ENCODE measurements at regions of chr6 and their contacts with region 1.

Region 1: GRCh38 chr6:168884646-168885086 is 369.0 kb downstream of the THBS2 start:
- DNase-seq: peak in 2 of 3 donors; percentile 73 to 79
- ATAC-seq: peak; percentile 88 to 97 (median 94)
- H3K4me3 ChIP-seq: peak overlapping the region in 1 of 3 donors; percentile 20
- H3K27ac ChIP-seq: no peak overlapping the region
- H3K4me1 ChIP-seq: no peaks in the 10 kb centered on the region
- H3K27me3 ChIP-seq: no peaks in the 10 kb centered on the region
- CTCF ChIP-seq: peak; percentile 90 to 93 (median 92)
- POLR2A ChIP-seq: no peak

Region 2: DNA sequence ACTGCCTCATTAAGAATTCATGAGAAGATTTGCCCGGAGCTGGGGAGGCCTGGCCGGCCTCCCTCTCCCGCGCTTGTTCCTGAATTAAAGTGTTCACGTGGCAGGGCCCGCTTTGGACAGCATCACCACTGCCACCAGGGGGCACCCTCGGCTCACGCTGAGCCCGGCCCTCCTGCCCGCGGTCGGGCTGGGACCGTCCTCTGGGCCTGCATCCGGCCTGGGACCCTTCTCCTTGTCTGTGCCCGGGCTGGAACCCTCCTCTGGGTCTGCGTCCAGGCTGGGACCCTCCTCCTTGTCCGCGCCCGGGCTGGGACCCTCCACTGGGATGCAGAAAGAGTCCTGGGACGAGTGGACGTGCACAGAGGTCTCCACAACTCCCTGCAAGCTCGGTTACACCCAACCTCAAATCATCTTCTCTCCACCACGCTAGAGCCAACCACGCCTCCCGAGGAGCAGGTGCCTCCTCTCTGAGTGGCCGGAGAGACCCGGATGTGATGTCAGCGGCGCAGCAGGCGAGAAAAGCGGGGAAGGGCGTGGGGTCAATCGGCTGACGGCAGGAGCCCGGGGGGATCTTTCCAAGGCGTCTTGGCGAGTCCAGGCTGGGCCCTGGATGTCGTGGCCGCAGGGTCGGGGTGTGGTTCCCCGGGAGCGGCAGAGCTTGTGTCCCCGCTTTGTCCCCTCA is 514.2 kb before region 1 on chr6:
- intact Hi-C with region 1: loop called (anchors 5 kb)
- DNase-seq: peak; percentile 71 to 76 (median 73)
- ATAC-seq: peak; percentile 93 to 97 (median 95)
- H3K4me3 ChIP-seq: no peak overlapping the region
- H3K27ac ChIP-seq: no peak overlapping the region
- H3K4me1 ChIP-seq: no peaks in the 10 kb centered on the region
- H3K27me3 ChIP-seq: no peaks in the 10 kb centered on the region
- CTCF ChIP-seq: peak; percentile 78 to 88 (median 84)
- POLR2A ChIP-seq: no peak

Region 3: GRCh38 chr6:168377484-168377855 is 507.2 kb before region 1 on chr6:
- intact Hi-C with region 1: loop called (anchors 5 kb)
- DNase-seq: no peak
- ATAC-seq: no peak
- H3K4me3 ChIP-seq: no peak overlapping the region
- H3K27ac ChIP-seq: no peak overlapping the region
- H3K4me1 ChIP-seq: no peaks in the 10 kb centered on the region
- H3K27me3 ChIP-seq: no peaks in the 10 kb centered on the region
- CTCF ChIP-seq: no peak
- POLR2A ChIP-seq: no peak

Region 4: GRCh38 chr6:169253337-169254238 is 368.9 kb after region 1 on chr6 and contains the start of gene THBS2:
- intact Hi-C with region 1: no loop called
- DNase-seq: peak in 1 of 3 donors; percentile 17
- ATAC-seq: peak; percentile 25 to 73 (median 33)
- H3K4me3 ChIP-seq: peak within 1 kb of the TSS in 2 of 3 donors; percentile 14 to 25
- H3K27ac ChIP-seq: peak within 1 kb of the TSS in 1 of 3 donors; percentile 43
- H3K4me1 ChIP-seq: no peaks in the 10 kb centered on the region
- H3K27me3 ChIP-seq: no peaks in the 10 kb centered on the region
- CTCF ChIP-seq: no peak
- POLR2A ChIP-seq: peak; percentile 52
- total RNA-seq, gene THBS2: 2.7 to 28.7 (median 7.8) TPM

Measured in right lobe of liver (tissue), 6 donors.